ENCODE measurements at regions of chr10 and their contacts with region 1.

Region 1: DNA sequence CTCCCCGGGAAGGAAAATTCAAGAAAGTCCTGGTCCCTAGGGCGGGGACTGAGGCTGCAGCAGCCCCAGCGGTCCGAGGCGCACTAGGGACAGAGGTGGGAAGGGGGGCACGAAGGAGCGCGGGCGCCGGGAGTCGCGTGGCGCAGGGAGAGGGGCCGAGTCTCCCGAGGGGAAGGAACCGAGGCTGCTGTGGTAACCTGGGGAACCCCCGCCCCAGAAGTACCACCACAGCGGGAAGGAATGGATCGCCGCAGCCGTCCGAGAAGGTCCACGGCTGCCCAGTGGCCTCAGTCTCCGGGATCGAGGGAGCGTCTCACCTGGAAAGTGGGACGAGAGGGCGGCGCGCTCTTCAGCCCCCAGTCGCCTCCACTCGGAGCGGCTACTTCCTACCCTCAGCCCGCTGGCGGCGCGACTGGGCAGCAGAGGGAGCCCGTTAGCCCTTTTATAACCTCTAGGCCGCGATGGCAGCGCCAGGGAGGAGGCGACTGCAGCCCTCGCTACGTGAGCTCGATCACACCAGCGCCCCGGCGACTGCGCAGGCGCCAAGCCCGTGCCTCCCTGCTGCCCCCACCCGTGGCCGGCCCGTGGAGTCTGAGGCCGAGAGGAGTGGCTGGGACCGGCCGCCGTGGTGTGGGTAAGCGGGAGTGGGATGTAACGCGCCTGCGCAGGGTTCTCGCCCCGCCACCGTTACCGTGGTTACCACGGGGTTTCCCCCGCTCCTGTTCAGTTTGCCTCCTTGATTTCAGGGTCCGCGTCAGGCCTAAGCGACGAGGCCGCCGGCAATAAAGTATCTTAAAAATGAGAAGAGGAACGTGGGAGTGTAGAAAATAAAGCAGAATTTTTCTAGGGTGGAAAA is at the start of gene P4HA1:
- DNase-seq: peak; percentile 98 to 100 (median 99)

Region 2: DNA sequence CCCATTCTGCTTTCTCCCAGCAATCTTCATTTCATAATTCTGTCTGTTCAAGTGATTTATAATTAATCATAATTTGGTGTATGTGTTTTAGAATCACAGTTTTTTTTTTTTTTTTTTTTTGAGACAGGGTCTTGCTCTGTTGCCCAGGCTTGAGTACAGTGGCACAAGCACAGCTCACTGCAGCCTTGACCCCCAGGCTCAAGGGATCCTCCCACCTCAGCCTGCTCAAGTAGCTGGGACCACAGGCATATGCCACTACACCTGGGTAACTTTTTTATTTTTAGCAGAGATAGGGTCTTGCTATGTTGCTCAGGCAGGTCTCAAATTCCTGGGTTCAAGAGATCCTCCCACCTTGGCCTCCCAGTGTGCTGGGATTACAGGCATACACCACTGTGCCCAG is 92.9 kb before region 1 on chr10:
- intact Hi-C with region 1: no loop called
- DNase-seq: no peak

Region 3: GRCh38 chr10:73139251-73139650 is 42.6 kb after region 1 on chr10:
- intact Hi-C with region 1: no loop called
- DNase-seq: no peak

Region 4: DNA sequence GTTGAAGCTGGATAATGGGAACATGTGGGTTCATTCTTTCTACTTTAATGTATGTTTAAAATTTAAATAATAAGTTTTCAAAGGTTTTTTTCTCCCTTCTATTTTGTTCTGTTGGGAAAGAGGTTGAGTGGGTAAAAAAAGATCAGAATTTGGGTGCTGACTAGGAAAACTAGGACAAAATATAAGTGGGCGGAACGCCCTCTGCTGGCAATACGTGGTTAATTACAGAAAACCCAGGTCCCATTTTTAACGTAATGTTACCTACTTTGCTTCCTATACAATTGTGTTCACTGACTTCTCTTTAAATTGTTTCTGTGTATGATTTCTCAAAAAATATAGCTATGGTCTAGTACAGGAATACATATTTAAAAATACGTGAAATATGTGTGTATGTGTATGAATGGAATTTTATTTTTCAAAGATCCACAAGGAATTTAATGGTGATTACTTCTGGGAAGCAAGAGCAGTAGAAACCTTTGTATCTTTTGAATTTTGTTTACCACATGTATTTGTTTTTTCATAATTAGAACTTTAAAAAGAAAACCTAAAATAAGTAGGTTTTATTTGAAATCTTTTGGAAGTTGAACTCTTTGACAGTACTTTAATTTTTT is 62.5 kb after region 1 on chr10:
- intact Hi-C with region 1: loop called (anchors 1 kb)
- DNase-seq: peak in 7 of 10 donors; percentile 37 to 85 (median 63)

Region 5: GRCh38 chr10:73439605-73440312 is 343.1 kb after region 1 on chr10:
- intact Hi-C with region 1: no loop called
- DNase-seq: peak in 1 of 10 donors; percentile 17